Mammary epithelial cell (primary cell): ENCODE measurements at regions of chr5 and their contacts with region 1.

Region 1: DNA sequence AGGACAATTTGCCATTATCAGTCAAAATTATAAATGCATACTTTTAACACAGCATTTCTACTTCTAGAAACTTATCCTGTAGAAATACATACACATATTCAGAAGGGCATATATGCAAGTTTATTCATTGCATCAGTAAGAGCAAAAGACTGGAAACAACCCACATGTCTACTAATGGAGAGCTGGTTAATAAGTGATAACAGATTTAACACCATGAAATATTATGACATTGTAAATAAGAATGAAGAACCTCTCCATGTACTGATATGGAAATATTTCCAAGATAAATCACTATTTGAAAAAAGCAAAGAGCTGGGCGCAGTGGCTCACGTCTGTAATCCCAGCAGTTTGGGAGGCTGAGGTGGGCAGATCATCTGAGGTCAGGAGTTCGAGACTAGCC is 54.5 kb downstream of the ELOVL7 start:
- DNase-seq: no peak
- H3K4me3 ChIP-seq: no peak overlapping the region
- H3K27ac ChIP-seq: no peak overlapping the region
- H3K4me1 ChIP-seq: no peaks in the 10 kb centered on the region
- H3K27me3 ChIP-seq: no peaks in the 10 kb centered on the region
- CTCF ChIP-seq: no peak

Region 2: DNA sequence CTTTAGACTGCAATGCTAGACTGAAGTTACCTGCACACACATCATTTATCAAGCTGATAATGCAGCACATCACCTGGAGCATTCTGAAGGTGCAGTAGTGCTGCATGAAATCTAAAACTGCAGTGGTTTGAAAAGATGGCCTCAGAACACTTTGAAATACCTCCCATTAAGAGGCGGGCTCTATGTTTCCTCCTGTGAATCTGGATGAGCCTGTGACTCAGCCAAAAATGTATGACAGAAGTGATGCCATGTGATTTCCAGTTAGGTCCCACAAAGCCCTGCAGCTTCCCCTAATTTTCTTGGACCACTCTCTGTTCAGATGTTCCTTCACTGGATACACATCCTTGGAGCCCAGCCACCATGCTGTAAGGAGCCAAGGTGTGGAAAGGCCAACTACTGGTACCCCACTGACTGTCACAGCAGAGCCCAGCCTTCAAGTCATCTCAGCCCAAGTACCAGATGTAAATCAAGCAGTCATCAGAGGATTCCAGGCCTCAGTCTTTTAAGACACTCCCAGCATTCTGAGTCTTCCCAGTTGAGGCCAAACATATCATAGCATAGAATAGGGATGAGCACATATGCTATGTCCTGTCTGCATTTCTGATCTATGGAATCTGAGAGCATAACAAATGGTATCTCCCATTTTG is 62.4 kb before region 1 on chr5:
- CTCF ChIA-PET with region 1: no interaction called
- dilution Hi-C with region 1: loop called (anchors 5 kb)
- in situ Hi-C with region 1: no loop called
- intact Hi-C with region 1: no loop called
- DNase-seq: no peak
- H3K4me3 ChIP-seq: no peak overlapping the region
- H3K27ac ChIP-seq: no peak overlapping the region
- H3K4me1 ChIP-seq: no peaks in the 10 kb centered on the region
- H3K27me3 ChIP-seq: no peaks in the 10 kb centered on the region
- CTCF ChIP-seq: no peak